Mammary epithelial cell (primary cell): ENCODE measurements at regions of chr17 and their contacts with region 1.

Region 1: GRCh38 chr17:19019036-19019941 is 14.7 kb upstream of the FAM83G start:
- DNase-seq: no peak
- H3K4me3 ChIP-seq: no peak overlapping the region
- H3K27ac ChIP-seq: no peak overlapping the region
- H3K4me1 ChIP-seq: peaks cover 9% of the 10 kb centered on the region
- H3K27me3 ChIP-seq: no peaks in the 10 kb centered on the region
- CTCF ChIP-seq: no peak

Region 2: DNA sequence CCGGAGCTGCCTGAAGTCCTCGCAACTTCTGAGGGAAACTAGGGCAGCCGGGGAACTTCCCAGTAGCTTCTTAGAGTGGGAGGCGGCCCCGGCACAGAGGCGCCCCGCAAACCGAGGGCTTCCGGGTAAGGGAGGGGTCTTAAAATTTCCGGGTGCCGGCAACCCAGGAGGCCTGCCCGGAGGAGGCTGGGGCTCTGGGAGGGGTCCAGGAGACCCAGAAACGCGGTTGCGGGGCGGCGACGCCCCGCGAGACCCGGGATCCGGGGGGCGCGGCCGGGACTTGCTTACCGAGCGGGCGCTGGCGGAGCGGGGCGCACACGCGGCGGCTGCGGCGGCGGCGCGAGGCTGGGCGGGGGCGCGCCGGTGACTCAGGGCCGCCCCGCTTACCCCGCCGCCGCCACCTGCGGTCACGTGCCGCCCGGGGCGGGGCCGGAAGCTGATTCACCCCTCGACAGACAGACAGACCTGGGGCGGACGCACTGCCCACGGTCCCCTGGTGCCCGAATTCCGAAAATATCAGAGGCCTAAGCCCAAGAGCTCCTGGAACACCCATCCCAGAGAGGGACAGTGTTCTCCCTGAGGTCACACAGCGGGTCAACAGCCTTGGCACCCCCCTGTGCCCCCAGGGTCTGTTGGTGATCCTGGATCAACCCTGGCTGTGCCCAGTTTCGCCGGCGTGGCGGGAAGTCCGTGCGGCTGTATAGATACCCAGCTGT is 14.7 kb before region 1 on chr17 and contains the start of gene FAM83G:
- CTCF ChIA-PET with region 1: no interaction called
- dilution Hi-C with region 1: no loop called
- in situ Hi-C with region 1: no loop called
- intact Hi-C with region 1: loop called (anchors 1 kb)
- DNase-seq: peak; percentile 84
- H3K4me3 ChIP-seq: peak within 1 kb of the TSS; percentile 72 to 76 (median 74)
- H3K27ac ChIP-seq: peak within 1 kb of the TSS; percentile 83
- H3K4me1 ChIP-seq: peaks cover 49% of the 10 kb centered on the region
- H3K27me3 ChIP-seq: no peaks in the 10 kb centered on the region
- CTCF ChIP-seq: no peak
- total RNA-seq, gene FAM83G: 25.7 to 36.3 TPM